ENCODE measurements at regions of chr19 and their contacts with region 1.

Region 1: GRCh38 chr19:15418588-15419412 is at the start of gene AKAP8L:
- DNase-seq: peak; percentile 100
- ATAC-seq: peak; percentile 93
- H3K4me3 ChIP-seq: peak within 1 kb of the TSS; percentile 36 to 97 (median 91)
- H3K4me3 Mint-ChIP-seq: peak within 1 kb of the TSS; percentile 100
- H3K27ac ChIP-seq: peak within 1 kb of the TSS; percentile 68 to 85
- H3K27ac Mint-ChIP-seq: peak within 1 kb of the TSS; percentile 100
- H3K4me1 ChIP-seq: peaks cover 18 to 24% of the 10 kb centered on the region in 2 donors
- H3K4me1 Mint-ChIP-seq: peaks cover 39% of the 10 kb centered on the region
- H3K27me3 ChIP-seq: no peaks in the 10 kb centered on the region
- H3K27me3 Mint-ChIP-seq: no peaks in the 10 kb centered on the region
- CTCF ChIP-seq: peak; percentile 87
- total RNA-seq, gene AKAP8L: 211 and 219 TPM in 2 replicates

Region 2: GRCh38 chr19:15177269-15178116 is 241.3 kb before region 1 on chr19:
- CTCF ChIA-PET with region 1: interaction called, 25 read pairs
- POLR2A ChIA-PET with region 1: no interaction called
- intact Hi-C with region 1: no loop called
- DNase-seq: peak; percentile 91
- ATAC-seq: peak; percentile 100
- H3K4me3 ChIP-seq: no peak overlapping the region
- H3K4me3 Mint-ChIP-seq: peak overlapping the region; percentile 59
- H3K27ac ChIP-seq: no peak overlapping the region
- H3K27ac Mint-ChIP-seq: peak overlapping the region; percentile 22
- H3K4me1 ChIP-seq: peaks cover 4 to 6% of the 10 kb centered on the region in 2 donors
- H3K4me1 Mint-ChIP-seq: peaks cover 7% of the 10 kb centered on the region
- H3K27me3 ChIP-seq: peaks cover 0 to 22% (median 4%) of the 10 kb centered on the region in 4 experiments
- H3K27me3 Mint-ChIP-seq: peaks cover 24% of the 10 kb centered on the region
- CTCF ChIP-seq: peak; percentile 90

Region 3: DNA sequence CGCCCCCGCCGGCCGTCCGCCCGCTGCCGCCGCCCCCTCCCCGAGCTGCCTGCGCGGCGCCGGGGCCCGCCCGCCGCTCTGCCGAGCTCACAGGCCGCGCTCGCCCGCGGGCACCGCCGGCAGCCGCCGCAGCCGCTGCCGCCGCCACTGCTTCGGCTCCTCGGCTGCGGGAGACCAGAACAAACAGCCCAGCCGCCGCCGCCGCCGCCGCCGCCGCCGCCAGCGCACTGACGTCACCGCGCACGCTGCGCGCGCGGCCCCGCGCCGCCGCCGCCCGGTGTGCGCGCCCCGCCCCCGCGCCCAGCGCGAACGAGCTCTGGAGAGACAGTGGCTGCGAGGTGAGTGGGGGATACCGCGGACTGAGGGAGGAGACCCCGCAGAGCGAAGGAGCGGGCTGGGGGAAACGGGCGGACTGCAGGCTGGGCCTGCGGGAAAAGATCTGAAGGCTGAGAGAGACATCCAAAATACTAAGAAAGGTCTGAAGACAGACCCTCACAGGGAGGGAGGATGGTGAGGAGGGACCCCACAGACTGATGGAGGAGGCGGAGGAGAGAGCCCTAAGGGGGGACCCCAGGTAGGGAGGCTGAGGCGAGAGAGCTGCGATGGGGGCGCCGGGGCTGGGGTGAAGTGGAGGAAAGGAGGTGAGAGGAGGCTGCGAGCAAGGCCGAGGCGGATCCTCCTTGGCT is 86.3 kb before region 1 on chr19 and contains the start of gene BRD4:
- CTCF ChIA-PET with region 1: interaction called, 4 read pairs
- POLR2A ChIA-PET with region 1: interaction called, 12 read pairs
- intact Hi-C with region 1: loop called (anchors 2 kb)
- DNase-seq: peak; percentile 89
- ATAC-seq: peak; percentile 37
- H3K4me3 ChIP-seq: peak within 1 kb of the TSS; percentile 78 to 99 (median 85)
- H3K4me3 Mint-ChIP-seq: peak within 1 kb of the TSS; percentile 97
- H3K27ac ChIP-seq: peak within 1 kb of the TSS; percentile 92 to 96
- H3K27ac Mint-ChIP-seq: peak within 1 kb of the TSS; percentile 96
- H3K4me1 ChIP-seq: peaks cover 42 to 62% of the 10 kb centered on the region in 2 donors
- H3K4me1 Mint-ChIP-seq: peaks cover 52% of the 10 kb centered on the region
- H3K27me3 ChIP-seq: no peaks in the 10 kb centered on the region
- H3K27me3 Mint-ChIP-seq: no peaks in the 10 kb centered on the region
- CTCF ChIP-seq: no peak
- total RNA-seq, gene BRD4: 209 and 233 TPM in 2 replicates

Region 4: GRCh38 chr19:15432629-15433518 is 14.1 kb after region 1 on chr19:
- CTCF ChIA-PET with region 1: interaction called, 21 read pairs
- POLR2A ChIA-PET with region 1: interaction called, 15 read pairs
- intact Hi-C with region 1: loop called (anchors 1 kb)
- DNase-seq: peak; percentile 93
- ATAC-seq: peak; percentile 93
- H3K4me3 ChIP-seq: peak overlapping the region; percentile 71 to 93 (median 87)
- H3K4me3 Mint-ChIP-seq: peak overlapping the region; percentile 99
- H3K27ac ChIP-seq: peak overlapping the region; percentile 52 to 70
- H3K27ac Mint-ChIP-seq: peak overlapping the region; percentile 95
- H3K4me1 ChIP-seq: peaks cover 24 to 32% of the 10 kb centered on the region in 2 donors
- H3K4me1 Mint-ChIP-seq: peaks cover 27% of the 10 kb centered on the region
- H3K27me3 ChIP-seq: no peaks in the 10 kb centered on the region
- H3K27me3 Mint-ChIP-seq: no peaks in the 10 kb centered on the region
- CTCF ChIP-seq: no peak

Region 5: GRCh38 chr19:15466851-15467733 is 48.3 kb after region 1 on chr19:
- CTCF ChIA-PET with region 1: interaction called, 13 read pairs
- POLR2A ChIA-PET with region 1: no interaction called
- intact Hi-C with region 1: loop called (anchors 1 kb)
- DNase-seq: no peak
- ATAC-seq: no peak
- H3K4me3 ChIP-seq: no peak overlapping the region
- H3K4me3 Mint-ChIP-seq: peak overlapping the region; percentile 47
- H3K27ac ChIP-seq: no peak overlapping the region
- H3K27ac Mint-ChIP-seq: peak overlapping the region; percentile 68
- H3K4me1 ChIP-seq: peaks cover 41 to 53% of the 10 kb centered on the region in 2 donors
- H3K4me1 Mint-ChIP-seq: peaks cover 48% of the 10 kb centered on the region
- H3K27me3 ChIP-seq: peaks cover 0 to 24% (median 8%) of the 10 kb centered on the region in 4 experiments
- H3K27me3 Mint-ChIP-seq: peaks cover 19% of the 10 kb centered on the region
- CTCF ChIP-seq: no peak

Region 6: DNA sequence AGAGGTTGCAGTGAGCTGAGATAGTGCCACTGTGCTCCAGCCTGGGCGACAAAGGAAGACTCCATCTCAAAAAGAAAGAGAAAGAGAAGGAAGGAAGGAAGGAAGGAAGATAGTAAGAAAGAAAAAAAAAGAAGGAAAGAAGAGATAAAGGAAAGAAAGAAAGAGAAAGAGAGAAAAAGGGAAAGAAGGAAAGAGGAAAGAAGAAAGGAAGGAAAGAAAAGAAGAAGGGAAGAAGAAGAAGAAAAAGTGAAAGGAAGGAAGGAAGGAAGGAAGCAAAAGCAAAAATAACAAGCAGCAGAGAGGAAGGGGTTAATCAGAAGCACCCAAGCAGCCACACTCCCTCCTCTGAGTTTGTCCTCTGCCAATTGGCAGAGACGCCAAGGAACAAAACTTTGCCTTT is 1332.9 kb after region 1 on chr19:
- CTCF ChIA-PET with region 1: no interaction called
- POLR2A ChIA-PET with region 1: no interaction called
- intact Hi-C with region 1: no loop called
- DNase-seq: no peak
- ATAC-seq: no peak
- H3K4me3 ChIP-seq: no peak overlapping the region
- H3K4me3 Mint-ChIP-seq: no peak overlapping the region
- H3K27ac ChIP-seq: no peak overlapping the region
- H3K27ac Mint-ChIP-seq: no peak overlapping the region
- H3K4me1 ChIP-seq: no peaks in the 10 kb centered on the region
- H3K4me1 Mint-ChIP-seq: no peaks in the 10 kb centered on the region
- H3K27me3 ChIP-seq: peaks cover 0 to 3% (median 1%) of the 10 kb centered on the region in 4 experiments
- H3K27me3 Mint-ChIP-seq: peaks cover 7% of the 10 kb centered on the region
- CTCF ChIP-seq: peak; percentile 28